Esophagus muscularis mucosa (tissue), 4 donors: ENCODE measurements at regions of chr9 and their contacts with region 1.

Region 1: DNA sequence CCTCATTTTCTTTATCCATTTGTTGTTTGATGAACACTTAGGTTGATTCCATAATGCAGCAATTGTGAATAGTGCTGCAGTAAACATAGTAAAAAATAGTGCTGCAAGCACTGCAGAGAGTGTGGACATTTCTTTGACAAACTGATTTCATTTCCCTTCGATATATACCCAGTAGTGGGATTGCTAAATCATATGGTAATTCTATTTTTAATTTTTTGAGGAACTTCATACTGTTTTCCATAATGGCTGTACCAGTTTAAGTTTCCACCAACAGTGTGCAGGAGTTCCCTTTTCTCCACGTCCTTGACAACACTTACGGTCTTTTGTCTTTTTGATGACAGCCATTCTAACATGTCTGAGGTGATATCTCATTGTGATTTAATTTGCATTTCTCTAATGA is 138.2 kb upstream of the PLPPR1 start:
- DNase-seq: no peak
- H3K4me3 ChIP-seq: no peak overlapping the region
- H3K27ac ChIP-seq: no peak overlapping the region
- H3K4me1 ChIP-seq: no peaks in the 10 kb centered on the region
- H3K27me3 ChIP-seq: no peaks in the 10 kb centered on the region
- CTCF ChIP-seq: no peak
- EP300 ChIP-seq: no peak
- POLR2A ChIP-seq: no peak

Region 2: DNA sequence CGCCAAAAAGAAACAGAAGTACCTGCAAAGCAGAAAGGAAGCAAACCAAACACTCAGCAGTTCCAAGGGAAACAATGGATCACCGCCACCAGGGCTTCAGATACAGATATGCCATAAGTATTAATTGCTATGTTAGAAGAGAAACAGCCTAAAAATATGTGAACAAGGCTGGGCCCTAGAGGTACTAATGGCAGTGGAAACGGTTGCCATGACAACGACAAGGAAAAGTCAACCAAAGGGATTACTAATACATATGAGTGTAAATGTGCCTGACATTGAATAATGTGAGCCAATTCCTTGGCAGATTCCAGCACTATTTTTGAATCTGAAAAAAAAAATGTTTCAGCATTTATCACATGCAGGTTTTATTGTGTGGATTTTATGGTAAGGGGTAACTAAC is 237.5 kb before region 1 on chr9:
- intact Hi-C with region 1: no loop called
- DNase-seq: no peak
- H3K4me3 ChIP-seq: no peak overlapping the region
- H3K27ac ChIP-seq: no peak overlapping the region
- H3K4me1 ChIP-seq: no peaks in the 10 kb centered on the region
- H3K27me3 ChIP-seq: no peaks in the 10 kb centered on the region
- CTCF ChIP-seq: no peak
- EP300 ChIP-seq: no peak
- POLR2A ChIP-seq: no peak

Region 3: DNA sequence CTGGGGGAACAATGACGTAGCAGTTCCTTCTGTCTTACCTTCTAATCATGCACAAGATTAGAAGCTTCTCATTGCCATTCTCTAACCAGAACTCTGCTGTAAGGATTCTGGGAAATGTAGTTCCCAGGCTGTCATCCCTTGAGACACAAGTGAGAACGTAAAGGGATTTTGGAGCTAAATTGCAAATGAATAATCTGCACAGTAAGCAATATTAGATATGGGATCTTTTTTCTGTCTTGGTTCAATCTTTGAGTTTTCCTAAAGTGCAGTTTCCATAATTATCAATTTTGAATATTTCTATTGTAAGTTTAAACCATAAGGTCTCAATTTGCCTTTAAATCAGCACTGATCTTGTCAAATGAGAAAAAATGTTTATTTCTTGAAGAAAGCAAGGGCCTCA is 51.5 kb before region 1 on chr9:
- intact Hi-C with region 1: loop called (anchors 10 kb)
- DNase-seq: no peak
- H3K4me3 ChIP-seq: no peak overlapping the region
- H3K27ac ChIP-seq: no peak overlapping the region
- H3K4me1 ChIP-seq: no peaks in the 10 kb centered on the region
- H3K27me3 ChIP-seq: no peaks in the 10 kb centered on the region
- CTCF ChIP-seq: no peak
- EP300 ChIP-seq: no peak
- POLR2A ChIP-seq: no peak